ENCODE measurements at regions of chr11 and their contacts with region 1.

Region 1: GRCh38 chr11:34105079-34105956 is at the start of gene NAT10:
- DNase-seq: peak; percentile 94
- H3K27ac ChIP-seq: peak within 1 kb of the TSS; percentile 92
- CTCF ChIP-seq: no peak

Region 2: GRCh38 chr11:33930317-33931021 is 174.8 kb before region 1 on chr11:
- CTCF ChIA-PET with region 1: no interaction called
- POLR2A ChIA-PET with region 1: no interaction called
- DNase-seq: no peak
- H3K27ac ChIP-seq: peak overlapping the region; percentile 79
- CTCF ChIP-seq: no peak

Region 3: DNA sequence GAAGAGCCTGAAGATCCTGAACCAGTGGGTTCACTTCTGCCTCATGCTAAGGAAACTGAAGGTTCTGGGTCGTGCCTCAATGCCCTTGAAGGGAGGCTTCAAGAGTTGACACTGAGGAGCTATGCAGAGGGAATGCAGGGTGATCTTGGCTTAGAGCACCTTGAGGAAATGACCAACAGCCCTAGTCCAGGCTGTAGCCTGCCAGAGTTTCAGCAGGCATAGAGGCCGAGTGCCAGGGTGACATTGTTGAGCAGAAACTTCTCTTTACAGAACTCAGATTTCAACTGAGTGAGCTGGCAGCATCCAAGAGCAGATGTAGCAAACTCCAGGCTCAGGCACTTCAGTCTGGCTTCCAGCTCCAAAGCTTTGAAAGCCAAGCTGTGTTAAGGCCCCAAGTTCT is 76.9 kb before region 1 on chr11:
- CTCF ChIA-PET with region 1: no interaction called
- POLR2A ChIA-PET with region 1: interaction called, 11 read pairs
- DNase-seq: no peak
- H3K27ac ChIP-seq: peak overlapping the region; percentile 43
- CTCF ChIP-seq: no peak

Region 4: GRCh38 chr11:34243726-34244464 is 138.6 kb after region 1 on chr11:
- CTCF ChIA-PET with region 1: no interaction called
- POLR2A ChIA-PET with region 1: no interaction called
- DNase-seq: peak; percentile 93
- H3K27ac ChIP-seq: peak overlapping the region; percentile 74
- CTCF ChIP-seq: no peak

Measured in RWPE1 (cell line).